PC-9 (cell line): ENCODE measurements at regions of chr1 and their contacts with region 1.

Region 1: GRCh38 chr1:230037261-230037660 is 29.8 kb upstream of the GALNT2 start:
- DNase-seq: no peak
- H3K4me3 ChIP-seq: no peak overlapping the region
- H3K27ac ChIP-seq: no peak overlapping the region
- H3K4me1 ChIP-seq: peaks cover 10% of the 10 kb centered on the region
- H3K27me3 ChIP-seq: no peaks in the 10 kb centered on the region
- CTCF ChIP-seq: no peak

Region 2: GRCh38 chr1:230084138-230084880 is 47.0 kb after region 1 on chr1:
- CTCF ChIA-PET with region 1: no interaction called
- POLR2A ChIA-PET with region 1: interaction called, 10 read pairs
- intact Hi-C with region 1: no loop called
- DNase-seq: peak; percentile 86 to 95
- H3K4me3 ChIP-seq: peak overlapping the region; percentile 4; the same call in 1 of the 2 replicates
- H3K27ac ChIP-seq: peak overlapping the region; percentile 85
- H3K4me1 ChIP-seq: peaks cover 48% of the 10 kb centered on the region
- H3K27me3 ChIP-seq: no peaks in the 10 kb centered on the region
- CTCF ChIP-seq: no peak